ENCODE measurements at regions of chr2 and their contacts with region 1.

Region 1: GRCh38 chr2:101205521-101205998 is 47.1 kb upstream of the CNOT11 start:
- DNase-seq: peak; percentile 89
- H3K4me3 ChIP-seq: peak overlapping the region; percentile 16
- H3K27ac ChIP-seq: no peak overlapping the region
- H3K4me1 ChIP-seq: no peaks in the 10 kb centered on the region
- H3K27me3 ChIP-seq: no peaks in the 10 kb centered on the region
- CTCF ChIP-seq: peak; percentile 73

Region 2: GRCh38 chr2:100013892-100014677 is 1191.5 kb before region 1 on chr2:
- CTCF ChIA-PET with region 1: no interaction called
- POLR2A ChIA-PET with region 1: no interaction called
- intact Hi-C with region 1: no loop called
- DNase-seq: no peak
- H3K4me3 ChIP-seq: no peak overlapping the region
- H3K27ac ChIP-seq: no peak overlapping the region
- H3K4me1 ChIP-seq: no peaks in the 10 kb centered on the region
- H3K27me3 ChIP-seq: peaks cover 18% of the 10 kb centered on the region
- CTCF ChIP-seq: no peak

Region 3: GRCh38 chr2:100610381-100610831 is 595.2 kb before region 1 on chr2:
- CTCF ChIA-PET with region 1: interaction called, 5 read pairs
- POLR2A ChIA-PET with region 1: no interaction called
- intact Hi-C with region 1: loop called (anchors 2 kb)
- DNase-seq: peak; percentile 78
- H3K4me3 ChIP-seq: no peak overlapping the region
- H3K27ac ChIP-seq: no peak overlapping the region
- H3K4me1 ChIP-seq: no peaks in the 10 kb centered on the region
- H3K27me3 ChIP-seq: no peaks in the 10 kb centered on the region
- CTCF ChIP-seq: peak; percentile 76

Region 4: GRCh38 chr2:101012706-101013181 is 192.8 kb before region 1 on chr2:
- CTCF ChIA-PET with region 1: interaction called, 7 read pairs
- POLR2A ChIA-PET with region 1: no interaction called
- intact Hi-C with region 1: loop called (anchors 1 kb)
- DNase-seq: peak; percentile 62
- H3K4me3 ChIP-seq: no peak overlapping the region
- H3K27ac ChIP-seq: no peak overlapping the region
- H3K4me1 ChIP-seq: no peaks in the 10 kb centered on the region
- H3K27me3 ChIP-seq: no peaks in the 10 kb centered on the region
- CTCF ChIP-seq: peak; percentile 84

Region 5: GRCh38 chr2:101036562-101037457 is 168.8 kb before region 1 on chr2:
- CTCF ChIA-PET with region 1: interaction called, 8 read pairs
- POLR2A ChIA-PET with region 1: no interaction called
- intact Hi-C with region 1: loop called (anchors 2 kb)
- DNase-seq: peak; percentile 42
- H3K4me3 ChIP-seq: no peak overlapping the region
- H3K27ac ChIP-seq: no peak overlapping the region
- H3K4me1 ChIP-seq: no peaks in the 10 kb centered on the region
- H3K27me3 ChIP-seq: no peaks in the 10 kb centered on the region
- CTCF ChIP-seq: peak; percentile 61

Region 6: GRCh38 chr2:101219246-101219645 is 13.7 kb after region 1 on chr2:
- CTCF ChIA-PET with region 1: interaction called, 8 read pairs
- POLR2A ChIA-PET with region 1: interaction called, 14 read pairs
- intact Hi-C with region 1: no loop called
- DNase-seq: no peak
- H3K4me3 ChIP-seq: no peak overlapping the region
- H3K27ac ChIP-seq: no peak overlapping the region
- H3K4me1 ChIP-seq: no peaks in the 10 kb centered on the region
- H3K27me3 ChIP-seq: no peaks in the 10 kb centered on the region
- CTCF ChIP-seq: no peak